ENCODE measurements at regions of chr15 and their contacts with region 1.

Region 1: GRCh38 chr15:40323239-40323952 is at the start of gene INAFM2:
- DNase-seq: peak; percentile 74 to 96
- H3K4me3 ChIP-seq: peak within 1 kb of the TSS; percentile 74 to 82
- H3K27ac ChIP-seq: peak within 1 kb of the TSS; percentile 90 to 98
- H3K4me1 ChIP-seq: peaks cover 30 to 32% of the 10 kb centered on the region in 2 donors
- H3K27me3 ChIP-seq: no peaks in the 10 kb centered on the region
- CTCF ChIP-seq: peak; percentile 66 to 83 (median 67)
- total RNA-seq, gene INAFM2: 69.8 TPM

Region 2: GRCh38 chr15:40338041-40338657 is 14.8 kb after region 1 on chr15:
- intact Hi-C with region 1: loop called (anchors 1 kb)
- DNase-seq: peak in 1 of 2 donors; percentile 89
- H3K4me3 ChIP-seq: peak overlapping the region; percentile 24 to 40
- H3K27ac ChIP-seq: peak overlapping the region; percentile 98 to 99
- H3K4me1 ChIP-seq: peaks cover 62 to 95% of the 10 kb centered on the region in 2 donors
- H3K27me3 ChIP-seq: no peaks in the 10 kb centered on the region
- CTCF ChIP-seq: peak; percentile 56 to 77 (median 68)

Region 3: DNA sequence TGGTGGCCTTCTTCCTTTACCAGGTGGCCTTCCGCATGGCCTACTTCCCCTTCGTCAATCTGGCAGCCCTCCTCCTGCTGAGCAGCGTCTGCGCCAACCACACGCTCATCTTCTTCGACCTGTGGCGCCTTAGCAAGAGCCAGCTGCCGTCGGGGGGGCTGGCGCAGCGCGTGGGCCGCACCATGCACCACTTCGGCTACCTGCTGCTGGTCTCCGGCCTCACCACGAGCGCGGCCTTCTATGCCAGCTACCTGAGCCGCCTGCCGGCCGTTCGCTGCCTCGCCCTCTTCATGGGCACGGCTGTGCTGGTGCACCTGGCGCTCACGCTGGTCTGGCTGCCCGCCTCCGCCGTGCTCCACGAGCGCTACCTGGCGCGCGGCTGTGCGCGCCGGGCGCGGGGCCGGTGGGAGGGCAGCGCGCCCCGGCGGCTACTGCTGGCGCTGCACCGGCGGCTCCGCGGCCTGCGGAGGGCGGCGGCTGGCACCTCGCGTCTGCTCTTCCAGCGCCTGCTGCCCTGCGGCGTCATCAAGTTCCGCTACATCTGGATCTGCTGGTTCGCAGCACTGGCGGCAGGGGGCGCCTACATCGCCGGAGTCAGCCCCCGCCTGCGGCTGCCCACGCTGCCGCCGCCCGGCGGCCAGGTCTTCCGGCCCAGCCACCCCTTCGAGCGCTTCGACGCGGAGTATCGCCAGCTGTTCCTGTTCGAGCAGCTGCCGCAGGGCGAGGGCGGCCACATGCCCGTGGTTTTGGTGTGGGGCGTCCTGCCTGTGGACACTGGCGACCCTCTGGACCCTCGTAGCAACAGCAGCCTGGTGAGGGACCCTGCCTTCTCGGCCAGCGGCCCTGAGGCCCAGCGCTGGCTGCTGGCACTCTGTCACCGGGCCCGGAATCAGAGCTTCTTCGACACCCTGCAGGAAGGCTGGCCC is 44.6 kb after region 1 on chr15:
- intact Hi-C with region 1: loop called (anchors 1 kb)
- DNase-seq: peak; percentile 67 to 91
- H3K4me3 ChIP-seq: peak overlapping the region; percentile 41 to 61
- H3K27ac ChIP-seq: peak overlapping the region in 1 of 2 donors; percentile 24
- H3K4me1 ChIP-seq: peaks cover 10 to 17% of the 10 kb centered on the region in 2 donors
- H3K27me3 ChIP-seq: no peaks in the 10 kb centered on the region
- CTCF ChIP-seq: peak; percentile 84 to 98 (median 85)

Region 4: GRCh38 chr15:40421246-40422157 is 98.1 kb after region 1 on chr15:
- intact Hi-C with region 1: loop called (anchors 1 kb)
- DNase-seq: peak in 1 of 2 donors; percentile 81
- H3K4me3 ChIP-seq: peak overlapping the region in 1 of 2 donors; percentile 45
- H3K27ac ChIP-seq: no peak overlapping the region
- H3K4me1 ChIP-seq: peaks cover 5 to 13% of the 10 kb centered on the region in 2 donors
- H3K27me3 ChIP-seq: no peaks in the 10 kb centered on the region
- CTCF ChIP-seq: peak; percentile 94 to 97 (median 94)

Region 5: DNA sequence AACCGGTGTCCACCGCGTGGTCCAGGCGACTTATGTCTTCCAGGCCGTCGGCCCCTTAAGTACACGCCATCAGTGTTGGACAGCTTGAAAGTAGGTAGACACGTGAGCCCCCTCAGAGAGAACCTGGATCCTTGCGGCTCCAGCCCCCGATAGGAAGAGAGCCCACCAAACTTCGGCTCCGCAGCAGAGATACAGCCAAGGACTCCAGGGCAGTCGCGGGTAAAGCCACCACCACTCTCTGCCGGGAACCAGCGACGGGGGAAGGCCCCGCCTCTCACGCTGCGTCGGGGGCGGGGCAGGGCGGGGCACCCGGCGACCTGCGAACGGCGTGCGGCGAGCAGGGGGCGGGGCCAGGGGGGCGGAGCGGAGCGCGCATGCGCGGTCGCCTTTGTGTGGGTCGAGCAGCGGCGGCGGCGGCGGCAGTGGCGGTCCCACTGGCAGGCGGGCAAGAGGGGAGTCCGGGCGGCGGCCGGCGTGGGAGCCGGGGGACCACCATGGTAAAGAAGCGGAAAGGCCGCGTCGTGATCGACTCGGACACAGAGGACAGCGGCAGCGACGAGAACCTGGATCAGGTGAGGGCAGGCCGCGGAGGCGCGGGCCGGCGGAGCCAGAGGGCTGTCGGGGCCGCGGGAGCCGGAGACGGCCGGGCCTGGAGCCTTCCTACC is 1093.5 kb after region 1 on chr15 and contains the start of gene RTF1:
- intact Hi-C with region 1: loop called (anchors 2 kb)
- DNase-seq: peak; percentile 68 to 96
- H3K4me3 ChIP-seq: peak within 1 kb of the TSS; percentile 70 to 86
- H3K27ac ChIP-seq: peak within 1 kb of the TSS; percentile 73 to 80
- H3K4me1 ChIP-seq: peaks cover 7 to 13% of the 10 kb centered on the region in 2 donors
- H3K27me3 ChIP-seq: no peaks in the 10 kb centered on the region
- CTCF ChIP-seq: no peak
- total RNA-seq, gene RTF1: 9.4 TPM